GM23248 (cell line): ENCODE measurements at regions of chr11 and their contacts with region 1.

Region 1: GRCh38 chr11:14270690-14271542 is 88.1 kb downstream of the RRAS2 start:
- DNase-seq: no peak
- H3K4me3 ChIP-seq: no peak overlapping the region
- H3K27ac ChIP-seq: no peak overlapping the region
- H3K4me1 ChIP-seq: no peaks in the 10 kb centered on the region
- H3K27me3 ChIP-seq: no peaks in the 10 kb centered on the region

Region 2: GRCh38 chr11:14119357-14119756 is 151.6 kb before region 1 on chr11:
- in situ Hi-C with region 1: no loop called
- DNase-seq: peak; percentile 25
- H3K4me3 ChIP-seq: no peak overlapping the region
- H3K27ac ChIP-seq: no peak overlapping the region
- H3K4me1 ChIP-seq: peaks cover 2% of the 10 kb centered on the region; the same call in 1 of the 2 replicates
- H3K27me3 ChIP-seq: no peaks in the 10 kb centered on the region

Region 3: DNA sequence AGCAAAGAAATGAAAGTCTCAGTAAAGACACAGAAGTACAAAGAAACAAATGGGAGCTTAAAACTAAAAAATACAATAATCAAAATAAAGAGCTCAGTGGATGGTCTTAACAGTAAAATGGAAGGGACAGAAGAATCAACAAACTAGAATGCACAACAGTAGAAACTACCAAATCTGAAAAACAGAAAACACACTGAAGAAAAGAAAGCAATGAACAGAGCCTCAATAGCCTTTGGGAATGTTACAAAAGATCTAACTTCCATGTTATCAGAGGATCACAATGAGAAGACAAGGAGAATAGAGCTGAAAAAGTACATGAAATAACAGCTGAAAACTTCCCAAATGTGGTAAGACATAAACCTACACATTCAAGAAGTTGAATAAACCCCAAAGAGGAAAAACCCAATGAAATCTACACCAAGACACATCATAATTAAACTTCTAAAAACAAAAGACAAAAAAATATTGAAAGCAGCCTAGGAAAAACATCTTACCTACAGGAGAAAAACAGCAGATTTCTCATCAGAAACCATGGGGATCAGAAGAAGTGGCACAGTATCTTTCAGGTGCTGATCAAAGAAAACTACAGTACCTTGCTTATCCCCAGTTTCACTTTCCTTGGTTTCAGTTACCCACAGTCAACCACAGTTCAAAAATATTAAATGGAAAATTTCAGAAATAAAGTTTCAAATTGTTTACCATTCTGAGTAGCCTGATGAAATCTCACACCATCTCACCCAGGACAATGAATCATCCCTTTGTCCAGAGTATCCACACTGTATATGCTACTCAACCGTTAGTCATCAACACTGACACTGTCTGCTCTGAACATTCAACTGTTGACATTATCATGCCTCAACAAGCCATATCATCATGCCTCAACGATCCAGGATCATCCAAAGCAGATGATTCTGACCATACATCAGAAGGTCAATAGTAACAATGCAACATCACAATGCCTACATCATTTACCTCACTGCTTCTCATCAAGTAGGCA is 65.9 kb after region 1 on chr11:
- in situ Hi-C with region 1: loop called (anchors 10 kb)
- DNase-seq: peak; percentile 97
- H3K4me3 ChIP-seq: peak overlapping the region; percentile 54
- H3K27ac ChIP-seq: peak overlapping the region; percentile 87
- H3K4me1 ChIP-seq: peaks cover 62% of the 10 kb centered on the region
- H3K27me3 ChIP-seq: no peaks in the 10 kb centered on the region

Region 4: GRCh38 chr11:14443638-14444037 is 172.7 kb after region 1 on chr11:
- in situ Hi-C with region 1: no loop called
- DNase-seq: peak; percentile 57
- H3K4me3 ChIP-seq: no peak overlapping the region
- H3K27ac ChIP-seq: peak overlapping the region; percentile 7
- H3K4me1 ChIP-seq: peaks cover 57% of the 10 kb centered on the region
- H3K27me3 ChIP-seq: no peaks in the 10 kb centered on the region